Activated CD4-positive, alpha-beta T cell treated with anti-CD3 and anti-CD28 coated beads for 36 hours (primary cell): ENCODE measurements at regions of chr4 and their contacts with region 1.

Region 1: DNA sequence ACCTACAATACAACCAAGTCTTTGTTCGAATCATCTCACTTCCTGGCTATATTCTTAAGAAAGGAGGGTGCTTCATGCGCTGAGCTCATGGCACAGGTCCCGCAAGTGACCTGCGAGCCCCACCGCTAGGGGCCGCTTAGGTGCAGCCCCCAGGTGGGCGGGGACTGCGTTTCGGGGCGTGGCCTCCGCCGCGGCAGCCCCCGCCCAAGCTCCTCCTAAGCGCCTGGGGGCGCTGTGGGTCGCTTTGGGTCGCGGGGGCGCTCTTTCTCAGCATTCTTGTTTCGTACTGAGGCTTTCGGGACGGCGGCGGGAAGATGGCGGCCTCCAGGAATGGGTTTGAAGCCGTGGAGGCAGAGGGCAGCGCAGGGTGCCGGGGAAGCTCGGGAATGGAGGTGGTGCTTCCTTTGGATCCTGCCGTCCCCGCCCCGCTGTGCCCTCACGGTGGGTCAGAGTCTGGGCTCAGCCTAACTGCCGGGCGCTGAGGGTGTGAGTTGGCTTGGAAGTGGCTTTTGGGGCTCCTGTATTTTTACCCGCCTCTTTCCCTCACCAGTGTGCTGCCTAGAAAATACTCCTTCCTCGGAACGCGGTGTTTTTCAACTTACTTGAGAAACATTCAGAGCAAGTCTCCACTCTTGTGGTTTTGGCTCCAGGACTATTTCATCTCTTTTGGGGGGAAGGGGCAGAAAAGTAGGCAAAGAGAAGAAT is at the start of gene ZCCHC4:
- DNase-seq: peak; percentile 94
- ATAC-seq: peak; percentile 99
- H3K4me3 Mint-ChIP-seq: peak within 1 kb of the TSS; percentile 96
- H3K27ac Mint-ChIP-seq: peak within 1 kb of the TSS; percentile 94
- H3K4me1 Mint-ChIP-seq: peaks cover 22% of the 10 kb centered on the region
- H3K27me3 Mint-ChIP-seq: peaks cover 3% of the 10 kb centered on the region
- total RNA-seq, gene ZCCHC4: 11.7 to 12.3 TPM

Region 2: GRCh38 chr4:24560868-24561368 is 751.7 kb before region 1 on chr4:
- CTCF ChIA-PET with region 1: no interaction called
- POLR2A ChIA-PET with region 1: no interaction called
- intact Hi-C with region 1: no loop called
- DNase-seq: no peak
- ATAC-seq: no peak
- H3K4me3 Mint-ChIP-seq: no peak overlapping the region
- H3K27ac Mint-ChIP-seq: no peak overlapping the region
- H3K4me1 Mint-ChIP-seq: peaks cover 77% of the 10 kb centered on the region
- H3K27me3 Mint-ChIP-seq: no peaks in the 10 kb centered on the region

Region 3: DNA sequence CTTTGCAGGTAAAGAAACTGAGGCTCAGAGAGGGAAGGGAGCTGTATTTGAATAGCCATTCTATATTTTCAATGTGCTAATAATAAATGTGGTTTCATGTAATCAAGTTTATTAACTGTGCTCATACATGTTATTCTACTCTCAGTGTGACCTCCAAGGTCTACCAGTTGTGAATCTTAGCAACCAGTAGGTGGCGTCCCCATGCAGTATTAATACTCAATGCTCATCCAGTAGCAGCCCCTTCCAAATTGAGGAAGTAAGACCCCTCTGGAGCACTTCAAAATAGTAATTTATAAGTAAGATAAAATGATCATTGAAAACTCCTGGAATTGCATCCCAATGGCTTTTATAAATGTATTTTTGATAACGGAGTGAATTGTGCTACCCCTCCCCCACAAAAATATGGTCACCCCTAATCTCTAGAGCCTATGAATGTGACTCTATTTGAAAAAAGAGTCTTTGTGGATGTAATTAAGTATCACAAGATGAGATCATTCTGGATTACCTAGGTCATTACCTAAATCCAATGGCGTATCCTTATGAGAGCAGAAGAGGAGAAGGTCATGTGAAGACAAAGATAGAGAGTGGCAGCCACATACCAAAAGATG is 132.0 kb before region 1 on chr4:
- CTCF ChIA-PET with region 1: interaction called, 10 read pairs
- POLR2A ChIA-PET with region 1: no interaction called
- intact Hi-C with region 1: loop called in 1 of 2 experiments (anchors 5 kb)
- DNase-seq: peak; percentile 50
- ATAC-seq: peak; percentile 57
- H3K4me3 Mint-ChIP-seq: no peak overlapping the region
- H3K27ac Mint-ChIP-seq: no peak overlapping the region
- H3K4me1 Mint-ChIP-seq: peaks cover 33% of the 10 kb centered on the region
- H3K27me3 Mint-ChIP-seq: no peaks in the 10 kb centered on the region

Region 4: DNA sequence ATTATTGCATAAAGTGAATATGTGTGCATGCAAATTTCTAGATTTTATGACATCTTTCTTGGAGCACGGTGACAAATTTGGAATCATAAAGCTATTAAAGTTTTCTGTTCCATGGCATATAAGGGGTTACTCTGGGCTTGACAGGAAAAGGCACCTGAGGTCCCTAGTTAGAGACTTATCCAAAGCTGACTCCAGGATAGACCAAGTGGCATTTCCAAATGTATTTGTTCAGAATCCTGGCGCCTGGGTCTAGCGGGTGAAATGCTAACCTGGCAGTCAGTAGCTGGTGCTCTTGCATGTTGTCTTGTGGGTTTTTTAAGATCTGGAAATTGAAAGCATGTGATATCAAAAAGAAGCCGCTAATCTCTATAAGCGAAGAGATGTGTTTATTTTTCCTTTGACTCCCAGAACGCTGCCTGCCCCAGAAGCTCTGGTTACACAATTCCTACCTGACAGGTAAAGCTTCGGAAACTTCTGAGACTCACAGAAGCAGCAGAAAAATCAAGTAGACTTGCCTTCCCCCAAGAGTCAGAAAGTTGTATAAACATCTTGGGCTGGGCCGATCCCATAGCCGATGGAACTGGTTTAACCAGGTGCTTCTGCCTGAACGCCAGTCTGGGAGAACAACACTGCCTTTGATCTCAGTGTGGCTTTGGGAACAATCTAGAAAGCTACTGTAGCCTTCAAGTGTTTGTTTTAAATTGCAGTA is 13.0 kb before region 1 on chr4:
- CTCF ChIA-PET with region 1: interaction called, 22 read pairs
- POLR2A ChIA-PET with region 1: no interaction called
- intact Hi-C with region 1: no loop called
- DNase-seq: no peak
- ATAC-seq: no peak
- H3K4me3 Mint-ChIP-seq: no peak overlapping the region
- H3K27ac Mint-ChIP-seq: no peak overlapping the region
- H3K4me1 Mint-ChIP-seq: peaks cover 8% of the 10 kb centered on the region
- H3K27me3 Mint-ChIP-seq: peaks cover 18% of the 10 kb centered on the region

Region 5: DNA sequence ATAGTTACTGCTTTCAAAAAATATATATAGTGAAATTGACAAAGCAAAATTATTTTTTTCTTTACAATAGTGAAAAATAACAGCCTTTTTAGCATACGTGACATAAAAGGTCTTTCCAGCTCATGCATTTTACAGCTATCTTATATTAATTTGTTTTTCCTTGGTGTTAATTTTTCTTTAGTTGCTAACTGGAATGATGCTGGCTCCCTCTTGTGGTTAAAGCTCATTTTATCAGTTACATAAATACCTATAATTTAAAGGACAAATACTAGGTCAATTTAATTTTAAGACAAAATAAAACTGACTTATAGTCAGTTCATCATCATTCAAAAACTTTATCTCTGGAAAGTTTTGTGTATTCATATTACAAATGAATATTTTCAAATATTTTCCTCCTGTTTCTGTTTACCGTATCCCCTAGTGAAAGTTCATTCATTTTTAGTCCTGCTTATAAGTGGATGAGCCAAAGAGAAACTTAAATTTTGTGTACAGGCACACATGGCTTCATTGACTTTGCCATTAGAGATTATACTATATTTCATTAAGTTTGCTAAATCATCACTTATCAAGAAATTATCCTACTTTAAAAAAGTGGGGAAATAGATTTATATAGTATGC is 54.5 kb after region 1 on chr4:
- CTCF ChIA-PET with region 1: interaction called, 30 read pairs
- POLR2A ChIA-PET with region 1: interaction called, 4 read pairs
- intact Hi-C with region 1: loop called (anchors 2 kb)
- DNase-seq: no peak
- ATAC-seq: no peak
- H3K4me3 Mint-ChIP-seq: no peak overlapping the region
- H3K27ac Mint-ChIP-seq: no peak overlapping the region
- H3K4me1 Mint-ChIP-seq: no peaks in the 10 kb centered on the region
- H3K27me3 Mint-ChIP-seq: no peaks in the 10 kb centered on the region

Region 6: GRCh38 chr4:25638806-25639205 is 326.2 kb after region 1 on chr4:
- CTCF ChIA-PET with region 1: no interaction called
- POLR2A ChIA-PET with region 1: no interaction called
- intact Hi-C with region 1: no loop called
- DNase-seq: no peak
- ATAC-seq: no peak
- H3K4me3 Mint-ChIP-seq: no peak overlapping the region
- H3K27ac Mint-ChIP-seq: no peak overlapping the region
- H3K4me1 Mint-ChIP-seq: no peaks in the 10 kb centered on the region
- H3K27me3 Mint-ChIP-seq: peaks cover 3% of the 10 kb centered on the region

Region 7: DNA sequence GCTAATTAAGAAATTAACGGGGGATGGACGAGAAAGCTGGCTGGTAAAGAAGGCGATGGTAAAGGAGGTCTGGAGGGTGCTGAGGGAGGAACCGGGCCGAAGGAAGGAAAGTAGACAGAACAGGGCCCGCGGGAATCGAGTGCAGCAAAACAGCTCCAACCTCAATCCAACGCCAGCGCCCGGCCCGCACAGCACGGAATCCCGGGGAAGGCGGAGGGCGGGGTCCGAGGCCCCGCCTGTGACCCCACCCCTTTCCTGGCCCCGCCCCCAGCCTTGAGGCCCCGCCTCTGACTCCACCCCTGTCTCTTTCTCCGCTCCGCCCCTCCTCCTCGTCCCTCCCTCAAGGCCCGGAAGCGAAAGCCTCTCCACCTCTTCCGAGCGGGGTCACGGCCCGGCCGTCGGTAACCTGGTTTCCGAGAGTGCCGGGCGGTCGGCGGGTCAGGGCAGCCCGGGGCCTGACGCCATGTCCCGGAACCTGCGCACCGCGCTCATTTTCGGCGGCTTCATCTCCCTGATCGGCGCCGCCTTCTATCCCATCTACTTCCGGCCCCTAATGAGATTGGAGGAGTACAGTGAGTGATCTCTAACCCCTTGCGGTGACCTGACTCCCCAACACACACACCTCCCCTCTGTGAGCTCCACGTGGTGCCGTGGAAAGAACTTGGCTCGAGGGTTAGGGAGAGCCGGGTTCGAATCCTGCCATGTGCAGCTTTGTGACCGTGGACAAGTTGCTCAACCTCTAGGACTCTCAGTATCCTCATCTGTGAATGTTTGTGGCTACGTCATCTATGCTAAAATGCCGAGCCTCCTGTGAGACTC is 601.4 kb after region 1 on chr4 and contains the start of gene SMIM20:
- CTCF ChIA-PET with region 1: no interaction called
- POLR2A ChIA-PET with region 1: no interaction called
- intact Hi-C with region 1: loop called (anchors 1 to 5 kb)
- DNase-seq: peak; percentile 94
- ATAC-seq: peak; percentile 96
- H3K4me3 Mint-ChIP-seq: peak within 1 kb of the TSS; percentile 93
- H3K27ac Mint-ChIP-seq: peak within 1 kb of the TSS; percentile 93
- H3K4me1 Mint-ChIP-seq: peaks cover 22% of the 10 kb centered on the region
- H3K27me3 Mint-ChIP-seq: no peaks in the 10 kb centered on the region
- total RNA-seq, gene SMIM20: 15.6 to 23.0 TPM

Region 8: GRCh38 chr4:25958110-25958509 is 645.5 kb after region 1 on chr4:
- CTCF ChIA-PET with region 1: no interaction called
- POLR2A ChIA-PET with region 1: no interaction called
- intact Hi-C with region 1: no loop called
- DNase-seq: no peak
- ATAC-seq: no peak
- H3K4me3 Mint-ChIP-seq: no peak overlapping the region
- H3K27ac Mint-ChIP-seq: no peak overlapping the region
- H3K4me1 Mint-ChIP-seq: no peaks in the 10 kb centered on the region
- H3K27me3 Mint-ChIP-seq: peaks cover 9% of the 10 kb centered on the region